ENCODE measurements at regions of chr5 and their contacts with region 1.

Region 1: DNA sequence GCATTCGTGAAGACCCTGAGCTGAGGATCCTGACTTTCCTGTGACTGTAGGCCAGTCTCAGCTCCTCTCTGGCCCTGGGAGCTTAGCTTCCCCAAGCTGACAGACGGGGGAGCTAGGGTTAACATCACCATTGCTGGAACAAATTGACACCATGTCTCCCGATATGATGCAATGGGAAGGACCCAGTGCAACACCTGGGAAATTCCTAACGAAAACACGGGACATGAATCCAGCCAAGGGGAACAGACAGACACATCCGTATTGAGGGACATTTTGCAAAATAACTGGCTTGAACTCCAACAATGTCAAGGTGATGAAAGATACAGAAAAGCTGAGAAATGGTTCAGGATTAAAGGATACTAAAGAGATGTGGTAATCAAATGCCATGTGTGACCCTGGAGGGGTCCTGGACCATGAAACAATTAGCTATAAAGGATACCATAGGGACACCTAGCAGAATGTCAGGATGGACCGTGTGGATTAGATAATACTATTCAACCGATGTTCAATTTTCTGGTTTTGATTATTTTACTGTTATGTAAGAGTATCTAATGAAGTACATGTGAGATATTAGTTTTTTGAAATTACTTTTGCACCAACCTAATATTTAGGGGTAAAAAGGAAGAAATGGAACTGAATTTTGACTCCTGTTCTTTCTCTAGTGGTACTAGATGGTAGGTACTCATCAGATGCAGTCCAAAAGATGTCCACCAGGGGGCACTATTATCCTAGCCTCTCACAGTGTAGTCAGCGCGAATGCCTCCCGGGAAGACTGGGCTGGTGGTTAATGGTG is 52.7 kb downstream of the NDST1 start:
- DNase-seq: no peak

Region 2: GRCh38 chr5:150778517-150779396 is 218.2 kb after region 1 on chr5 and contains the start of gene SMIM3:
- intact Hi-C with region 1: loop called (anchors 10 kb)
- DNase-seq: peak; percentile 93
- total RNA-seq, gene SMIM3: 15.3 TPM